ENCODE measurements at regions of chr5 and their contacts with region 1.

Region 1: GRCh38 chr5:151065609-151066008 is 15.2 kb downstream of the TNIP1 start:
- DNase-seq: no peak

Region 2: GRCh38 chr5:150234576-150235499 is 830.8 kb before region 1 on chr5:
- intact Hi-C with region 1: no loop called
- DNase-seq: no peak

Region 3: DNA sequence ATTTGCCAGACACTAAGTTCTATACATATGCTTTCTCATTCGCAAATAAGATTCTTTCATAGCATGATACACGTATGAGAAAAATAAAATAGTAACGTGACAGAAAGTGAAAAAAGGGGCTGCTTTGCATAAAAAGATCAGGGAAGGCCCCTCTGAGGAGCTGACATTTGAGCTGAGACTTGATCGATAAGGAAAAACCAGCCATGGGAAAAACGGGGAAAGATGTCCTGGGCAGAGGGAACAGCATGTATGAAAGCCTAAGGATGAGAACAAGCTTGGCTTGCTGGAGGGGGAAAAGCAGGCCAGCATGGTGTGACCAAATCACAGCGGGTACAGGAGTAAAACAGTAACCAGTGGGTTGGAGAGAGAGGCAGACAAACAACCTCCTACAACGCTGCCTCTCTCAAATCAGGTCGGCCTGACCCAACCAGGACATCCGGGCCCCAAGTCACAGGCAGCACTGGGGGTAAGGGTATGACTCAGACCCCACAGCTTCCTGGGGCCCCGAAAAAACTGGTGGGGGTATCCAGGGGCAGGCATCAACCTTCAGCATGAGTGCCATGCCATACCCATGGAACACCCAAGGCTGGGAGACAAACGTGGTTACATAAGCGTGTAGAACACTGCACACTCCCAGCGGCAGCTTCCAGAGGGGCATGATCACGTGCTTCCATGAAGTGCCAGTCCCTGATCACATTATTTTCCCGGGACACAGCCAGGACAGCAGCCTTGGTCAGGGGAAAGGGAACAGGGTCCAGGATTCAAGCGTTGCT is 13.1 kb after region 1 on chr5:
- intact Hi-C with region 1: loop called (anchors 2 kb)
- DNase-seq: no peak

Measured in cardiac septum (tissue), 1 donor.